CD4-positive, alpha-beta T cell (primary cell): ENCODE measurements at regions of chr4 and their contacts with region 1.

Region 1: GRCh38 chr4:39181905-39182638 is at the start of gene WDR19:
- DNase-seq: peak; percentile 95 to 100 (median 98)
- ATAC-seq: peak; percentile 93
- H3K4me3 ChIP-seq: peak within 1 kb of the TSS; percentile 94
- H3K4me3 Mint-ChIP-seq: no peak within 1 kb of the TSS
- H3K27ac ChIP-seq: peak within 1 kb of the TSS; percentile 21 to 53
- H3K27ac Mint-ChIP-seq: no peak within 1 kb of the TSS
- H3K4me1 ChIP-seq: peaks cover 16% of the 10 kb centered on the region
- H3K4me1 Mint-ChIP-seq: peaks cover 9% of the 10 kb centered on the region
- H3K27me3 ChIP-seq: no peaks in the 10 kb centered on the region
- H3K27me3 Mint-ChIP-seq: peaks cover 3% of the 10 kb centered on the region
- CTCF ChIP-seq: peak; percentile 61
- total RNA-seq, gene WDR19: 14.5 to 16.7 TPM

Region 2: GRCh38 chr4:39227906-39228305 is 45.8 kb after region 1 on chr4:
- CTCF ChIA-PET with region 1: no interaction called
- POLR2A ChIA-PET with region 1: no interaction called
- intact Hi-C with region 1: no loop called
- DNase-seq: no peak
- ATAC-seq: no peak
- H3K4me3 ChIP-seq: no peak overlapping the region
- H3K4me3 Mint-ChIP-seq: no peak overlapping the region
- H3K27ac ChIP-seq: no peak overlapping the region
- H3K27ac Mint-ChIP-seq: no peak overlapping the region
- H3K4me1 ChIP-seq: no peaks in the 10 kb centered on the region
- H3K4me1 Mint-ChIP-seq: no peaks in the 10 kb centered on the region
- H3K27me3 ChIP-seq: no peaks in the 10 kb centered on the region
- H3K27me3 Mint-ChIP-seq: no peaks in the 10 kb centered on the region
- CTCF ChIP-seq: no peak

Region 3: DNA sequence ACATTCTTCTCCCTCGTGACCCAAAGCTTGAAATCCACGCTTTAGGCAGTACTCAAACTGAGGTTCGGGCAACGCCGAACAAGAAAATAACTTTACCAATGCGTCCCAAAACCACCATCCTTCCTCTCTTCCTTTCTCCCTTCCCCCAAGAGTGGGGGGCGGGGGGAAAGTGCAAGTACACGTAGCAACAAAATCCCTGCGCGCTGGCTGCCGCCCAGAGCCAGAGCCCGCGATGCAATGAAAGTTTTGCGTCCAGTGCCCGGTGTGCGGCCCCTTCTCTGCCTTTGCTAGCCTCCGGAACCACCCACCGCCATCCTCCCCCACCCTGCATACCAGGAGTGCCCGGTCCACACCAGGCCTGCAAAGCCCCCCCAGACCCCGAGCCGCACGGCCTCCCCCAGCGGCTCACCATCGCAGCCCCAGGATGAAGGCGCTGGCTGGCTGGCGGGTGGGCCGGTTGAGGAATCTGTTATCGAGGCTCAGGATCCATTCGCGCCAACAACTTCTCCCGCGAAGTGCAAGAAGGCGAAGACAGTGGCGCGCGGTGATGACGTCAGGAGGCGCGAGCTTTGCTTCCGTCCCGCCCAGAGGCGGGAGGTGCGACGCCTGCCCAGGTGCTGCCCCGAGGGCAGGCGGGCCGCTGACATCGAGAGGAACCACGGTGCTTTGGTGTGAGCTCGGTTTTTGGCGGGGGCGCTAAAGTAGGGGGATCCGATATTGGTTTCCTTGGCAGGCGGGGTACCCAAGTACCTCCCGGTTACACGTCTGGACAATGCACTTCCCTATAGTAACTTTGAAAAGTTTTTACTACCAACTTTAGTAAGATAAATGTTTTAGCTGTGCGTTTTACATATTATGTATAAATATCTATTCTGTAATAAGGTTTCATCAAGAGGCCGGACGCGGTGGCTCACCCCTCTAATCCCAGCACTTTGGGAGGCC is 184.0 kb after region 1 on chr4 and contains the start of gene RFC1:
- CTCF ChIA-PET with region 1: no interaction called
- POLR2A ChIA-PET with region 1: interaction called, 5 read pairs
- intact Hi-C with region 1: loop called in 1 of 2 experiments (anchors 5 kb)
- DNase-seq: peak; percentile 85 to 97 (median 91)
- ATAC-seq: peak; percentile 95
- H3K4me3 ChIP-seq: peak within 1 kb of the TSS; percentile 98
- H3K4me3 Mint-ChIP-seq: peak within 1 kb of the TSS; percentile 93
- H3K27ac ChIP-seq: peak within 1 kb of the TSS; percentile 49 to 81
- H3K27ac Mint-ChIP-seq: peak within 1 kb of the TSS; percentile 91
- H3K4me1 ChIP-seq: peaks cover 30% of the 10 kb centered on the region
- H3K4me1 Mint-ChIP-seq: peaks cover 37% of the 10 kb centered on the region
- H3K27me3 ChIP-seq: no peaks in the 10 kb centered on the region
- H3K27me3 Mint-ChIP-seq: no peaks in the 10 kb centered on the region
- CTCF ChIP-seq: no peak
- total RNA-seq, gene RFC1: 97.0 to 104 TPM

Region 4: DNA sequence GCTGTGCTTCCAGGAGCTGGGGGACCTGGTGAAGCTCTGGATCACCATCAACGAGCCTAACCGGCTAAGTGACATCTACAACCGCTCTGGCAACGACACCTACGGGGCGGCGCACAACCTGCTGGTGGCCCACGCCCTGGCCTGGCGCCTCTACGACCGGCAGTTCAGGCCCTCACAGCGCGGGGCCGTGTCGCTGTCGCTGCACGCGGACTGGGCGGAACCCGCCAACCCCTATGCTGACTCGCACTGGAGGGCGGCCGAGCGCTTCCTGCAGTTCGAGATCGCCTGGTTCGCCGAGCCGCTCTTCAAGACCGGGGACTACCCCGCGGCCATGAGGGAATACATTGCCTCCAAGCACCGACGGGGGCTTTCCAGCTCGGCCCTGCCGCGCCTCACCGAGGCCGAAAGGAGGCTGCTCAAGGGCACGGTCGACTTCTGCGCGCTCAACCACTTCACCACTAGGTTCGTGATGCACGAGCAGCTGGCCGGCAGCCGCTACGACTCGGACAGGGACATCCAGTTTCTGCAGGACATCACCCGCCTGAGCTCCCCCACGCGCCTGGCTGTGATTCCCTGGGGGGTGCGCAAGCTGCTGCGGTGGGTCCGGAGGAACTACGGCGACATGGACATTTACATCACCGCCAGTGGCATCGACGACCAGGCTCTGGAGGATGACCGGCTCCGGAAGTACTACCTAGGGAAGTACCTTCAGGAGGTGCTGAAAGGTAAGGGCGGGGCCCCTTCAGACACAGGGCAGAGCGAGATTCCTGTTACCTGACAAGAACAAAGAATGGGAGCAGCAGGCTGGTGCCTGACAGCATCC is 264.9 kb after region 1 on chr4:
- CTCF ChIA-PET with region 1: no interaction called
- POLR2A ChIA-PET with region 1: no interaction called
- intact Hi-C with region 1: loop called in 1 of 2 experiments (anchors 5 kb)
- DNase-seq: peak in 13 of 14 experiments; percentile 4 to 82 (median 34)
- ATAC-seq: peak; percentile 86
- H3K4me3 ChIP-seq: peak overlapping the region; percentile 53
- H3K4me3 Mint-ChIP-seq: peak overlapping the region; percentile 76
- H3K27ac ChIP-seq: no peak overlapping the region
- H3K27ac Mint-ChIP-seq: peak overlapping the region; percentile 63
- H3K4me1 ChIP-seq: peaks cover 12% of the 10 kb centered on the region
- H3K4me1 Mint-ChIP-seq: peaks cover 9% of the 10 kb centered on the region
- H3K27me3 ChIP-seq: no peaks in the 10 kb centered on the region
- H3K27me3 Mint-ChIP-seq: no peaks in the 10 kb centered on the region
- CTCF ChIP-seq: no peak

Region 5: DNA sequence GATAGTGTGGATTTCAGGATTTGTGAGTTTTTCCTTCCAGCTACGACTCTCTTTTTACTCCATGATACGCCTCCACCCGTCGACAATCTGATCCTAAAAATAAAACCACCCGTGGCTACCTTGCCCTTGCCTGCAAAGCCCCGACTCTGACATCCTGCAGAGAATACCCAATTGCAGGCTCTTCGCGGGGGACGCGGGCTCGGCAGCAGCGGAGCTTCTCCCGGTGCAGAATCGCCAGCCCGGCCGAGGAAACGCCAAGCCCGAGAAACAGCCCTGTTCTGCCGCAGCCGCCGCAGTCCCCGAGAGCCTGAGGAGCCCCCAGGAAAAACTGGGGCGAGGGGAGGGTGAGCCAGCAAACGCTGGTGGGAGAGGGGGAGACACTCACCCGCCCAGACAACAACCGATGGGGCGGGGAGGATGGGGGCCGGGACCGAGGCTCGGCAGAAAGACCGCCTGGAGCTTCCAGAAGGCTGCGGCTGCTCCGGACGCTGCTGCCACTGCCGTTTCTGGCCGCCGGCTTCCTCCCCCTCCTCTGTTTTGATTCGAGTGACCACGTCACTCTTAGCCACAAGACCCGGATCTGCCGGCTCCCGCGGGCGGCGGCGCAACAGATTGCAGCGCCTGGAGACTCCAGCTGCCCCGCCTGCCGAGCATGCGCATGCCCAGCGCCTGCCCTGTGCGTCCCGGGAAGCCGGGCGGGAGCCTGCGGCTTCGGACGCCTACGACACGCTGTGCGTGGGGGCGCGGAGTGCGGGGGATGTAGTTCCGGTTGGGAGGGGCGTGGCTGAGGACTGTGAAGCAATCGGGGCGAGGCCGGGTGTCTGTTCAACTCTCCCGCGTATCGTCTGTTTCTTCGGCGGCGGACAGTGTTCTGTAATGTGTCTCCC is 456.5 kb after region 1 on chr4 and contains the start of gene SMIM14:
- CTCF ChIA-PET with region 1: no interaction called
- POLR2A ChIA-PET with region 1: no interaction called
- intact Hi-C with region 1: loop called in 1 of 2 experiments (anchors 10 kb)
- DNase-seq: peak; percentile 65 to 95 (median 84)
- ATAC-seq: peak; percentile 79
- H3K4me3 ChIP-seq: peak within 1 kb of the TSS; percentile 96
- H3K4me3 Mint-ChIP-seq: peak within 1 kb of the TSS; percentile 88
- H3K27ac ChIP-seq: peak within 1 kb of the TSS; percentile 78 to 90
- H3K27ac Mint-ChIP-seq: peak within 1 kb of the TSS; percentile 85
- H3K4me1 ChIP-seq: peaks cover 25% of the 10 kb centered on the region
- H3K4me1 Mint-ChIP-seq: peaks cover 50% of the 10 kb centered on the region
- H3K27me3 ChIP-seq: no peaks in the 10 kb centered on the region
- H3K27me3 Mint-ChIP-seq: no peaks in the 10 kb centered on the region
- CTCF ChIP-seq: no peak
- total RNA-seq, gene SMIM14: 2.0 to 3.1 TPM